Activated CD4-positive, alpha-beta T cell treated with anti-CD3 and anti-CD28 coated beads for 36 hours (primary cell): ENCODE measurements at regions of chr2 and their contacts with region 1.

Region 1: GRCh38 chr2:241734467-241735208 is at the start of gene D2HGDH:
- DNase-seq: peak; percentile 98
- ATAC-seq: peak; percentile 92
- H3K4me3 Mint-ChIP-seq: peak within 1 kb of the TSS; percentile 79
- H3K27ac Mint-ChIP-seq: peak within 1 kb of the TSS; percentile 70
- H3K4me1 Mint-ChIP-seq: peaks cover 57% of the 10 kb centered on the region
- H3K27me3 Mint-ChIP-seq: no peaks in the 10 kb centered on the region
- total RNA-seq, gene D2HGDH: 18.2 to 34.1 TPM

Region 2: GRCh38 chr2:240032406-240033329 is 1702.0 kb before region 1 on chr2:
- CTCF ChIA-PET with region 1: no interaction called
- POLR2A ChIA-PET with region 1: no interaction called
- intact Hi-C with region 1: no loop called
- DNase-seq: no peak
- ATAC-seq: no peak
- H3K4me3 Mint-ChIP-seq: no peak overlapping the region
- H3K27ac Mint-ChIP-seq: no peak overlapping the region
- H3K4me1 Mint-ChIP-seq: no peaks in the 10 kb centered on the region
- H3K27me3 Mint-ChIP-seq: peaks cover 34% of the 10 kb centered on the region

Region 3: GRCh38 chr2:240851078-240851991 is 883.3 kb before region 1 on chr2:
- CTCF ChIA-PET with region 1: no interaction called
- POLR2A ChIA-PET with region 1: no interaction called
- intact Hi-C with region 1: loop called in 1 of 2 experiments (anchors 5 kb)
- DNase-seq: peak; percentile 91
- ATAC-seq: peak; percentile 97
- H3K4me3 Mint-ChIP-seq: no peak overlapping the region
- H3K27ac Mint-ChIP-seq: no peak overlapping the region
- H3K4me1 Mint-ChIP-seq: no peaks in the 10 kb centered on the region
- H3K27me3 Mint-ChIP-seq: peaks cover 3% of the 10 kb centered on the region

Region 4: DNA sequence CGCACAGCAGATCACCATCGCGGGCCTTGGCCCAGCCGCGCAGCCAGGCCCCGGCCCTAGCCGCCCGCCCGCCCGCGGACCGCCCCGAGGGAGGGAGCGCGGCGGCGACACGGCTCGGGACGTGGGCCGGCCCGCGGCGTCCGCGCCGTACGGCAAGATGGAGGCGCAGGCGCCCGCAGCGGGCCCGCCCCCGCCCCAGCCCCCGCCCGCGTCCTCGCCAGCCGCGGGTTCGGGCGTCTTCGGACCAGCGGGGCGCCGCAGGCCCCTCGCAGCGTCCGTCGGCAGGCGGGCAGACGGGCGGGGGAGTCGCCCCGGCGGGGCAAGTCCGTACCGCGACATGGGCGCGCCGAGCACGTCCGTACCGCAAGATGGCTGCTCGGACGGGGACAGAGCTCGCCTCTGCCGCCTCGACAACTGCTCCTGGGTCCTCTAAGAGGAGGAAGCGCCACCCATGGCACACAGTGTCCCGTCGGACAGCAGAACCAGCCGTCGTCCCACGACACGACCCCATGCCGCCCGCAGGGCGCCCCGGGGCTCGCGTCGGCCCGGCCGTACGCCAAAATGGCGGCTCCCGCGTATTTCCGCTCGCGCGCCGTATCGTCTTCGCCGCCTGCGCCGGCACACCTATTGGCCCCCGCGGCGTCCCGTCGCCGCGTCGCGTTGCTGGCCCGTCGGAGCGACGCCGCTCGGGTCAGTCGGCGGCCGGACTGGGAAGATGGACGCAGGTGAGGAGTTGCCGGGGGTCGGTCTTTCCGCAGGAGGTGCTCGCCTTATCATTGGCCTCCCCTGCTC is 97.4 kb before region 1 on chr2 and contains the starts of genes ATG4B and THAP4:
- CTCF ChIA-PET with region 1: no interaction called
- POLR2A ChIA-PET with region 1: no interaction called
- intact Hi-C with region 1: loop called in 1 of 2 experiments (anchors 1 kb)
- DNase-seq: peak; percentile 90
- ATAC-seq: peak; percentile 69
- H3K4me3 Mint-ChIP-seq: peak within 1 kb of the TSS; percentile 84
- H3K27ac Mint-ChIP-seq: peak within 1 kb of the TSS; percentile 96
- H3K4me1 Mint-ChIP-seq: peaks cover 50% of the 10 kb centered on the region
- H3K27me3 Mint-ChIP-seq: no peaks in the 10 kb centered on the region
- total RNA-seq, gene ATG4B: 71.8 to 80.1 TPM
- total RNA-seq, gene THAP4: 42.5 to 54.1 TPM

Region 5: DNA sequence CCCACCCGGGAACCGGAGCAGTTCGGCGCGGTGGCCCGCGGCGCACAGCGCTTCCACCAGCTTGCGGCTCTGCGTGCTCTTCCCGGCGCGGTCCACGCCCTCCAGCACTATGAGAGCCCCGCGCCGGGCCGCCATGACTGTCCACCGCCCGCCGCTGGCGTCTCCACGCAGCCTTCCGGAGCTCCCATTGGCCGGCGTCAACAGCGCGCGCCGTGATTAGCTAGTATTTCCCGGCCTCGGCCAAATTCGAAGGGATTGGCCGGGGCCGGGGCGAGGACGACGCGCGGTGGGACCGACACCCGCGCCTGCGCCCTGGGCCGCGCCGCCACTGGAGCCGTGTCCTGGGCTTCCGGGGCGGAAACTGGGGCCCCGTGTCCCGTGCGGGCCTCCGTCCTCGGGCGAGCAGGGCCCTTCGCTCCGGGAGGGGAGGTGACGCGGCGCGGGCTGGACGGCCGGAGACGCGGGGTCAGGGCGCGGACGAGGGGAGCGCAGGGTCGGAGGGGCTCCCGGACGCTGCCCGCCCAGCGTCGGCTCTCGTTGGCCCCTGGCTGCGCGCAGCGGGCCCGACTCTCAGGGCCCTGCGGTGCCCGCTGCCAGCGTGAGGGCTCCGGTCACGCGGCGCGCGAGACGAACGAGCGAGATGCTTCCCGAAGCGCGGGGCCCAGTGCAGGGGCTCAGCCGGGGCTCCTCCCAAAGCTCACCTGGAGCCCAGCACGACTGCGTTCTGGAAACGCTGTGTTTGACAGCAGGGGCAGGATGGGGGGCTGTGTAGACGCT is 47.8 kb before region 1 on chr2 and contains the start of gene DTYMK:
- CTCF ChIA-PET with region 1: interaction called, 18 read pairs
- POLR2A ChIA-PET with region 1: no interaction called
- intact Hi-C with region 1: loop called (anchors 1 kb)
- DNase-seq: peak; percentile 98
- ATAC-seq: peak; percentile 96
- H3K4me3 Mint-ChIP-seq: peak within 1 kb of the TSS; percentile 98
- H3K27ac Mint-ChIP-seq: peak within 1 kb of the TSS; percentile 96
- H3K4me1 Mint-ChIP-seq: peaks cover 32% of the 10 kb centered on the region
- H3K27me3 Mint-ChIP-seq: no peaks in the 10 kb centered on the region
- total RNA-seq, gene DTYMK: 79.8 to 93.1 TPM

Region 6: GRCh38 chr2:241803387-241804325 is 69.0 kb after region 1 on chr2:
- CTCF ChIA-PET with region 1: no interaction called
- POLR2A ChIA-PET with region 1: interaction called, 3 read pairs
- intact Hi-C with region 1: loop called in 1 of 2 experiments (anchors 2 kb)
- DNase-seq: peak; percentile 69
- ATAC-seq: peak; percentile 76
- H3K4me3 Mint-ChIP-seq: peak overlapping the region; percentile 58
- H3K27ac Mint-ChIP-seq: peak overlapping the region; percentile 12
- H3K4me1 Mint-ChIP-seq: peaks cover 7% of the 10 kb centered on the region
- H3K27me3 Mint-ChIP-seq: peaks cover 6% of the 10 kb centered on the region

Region 7: DNA sequence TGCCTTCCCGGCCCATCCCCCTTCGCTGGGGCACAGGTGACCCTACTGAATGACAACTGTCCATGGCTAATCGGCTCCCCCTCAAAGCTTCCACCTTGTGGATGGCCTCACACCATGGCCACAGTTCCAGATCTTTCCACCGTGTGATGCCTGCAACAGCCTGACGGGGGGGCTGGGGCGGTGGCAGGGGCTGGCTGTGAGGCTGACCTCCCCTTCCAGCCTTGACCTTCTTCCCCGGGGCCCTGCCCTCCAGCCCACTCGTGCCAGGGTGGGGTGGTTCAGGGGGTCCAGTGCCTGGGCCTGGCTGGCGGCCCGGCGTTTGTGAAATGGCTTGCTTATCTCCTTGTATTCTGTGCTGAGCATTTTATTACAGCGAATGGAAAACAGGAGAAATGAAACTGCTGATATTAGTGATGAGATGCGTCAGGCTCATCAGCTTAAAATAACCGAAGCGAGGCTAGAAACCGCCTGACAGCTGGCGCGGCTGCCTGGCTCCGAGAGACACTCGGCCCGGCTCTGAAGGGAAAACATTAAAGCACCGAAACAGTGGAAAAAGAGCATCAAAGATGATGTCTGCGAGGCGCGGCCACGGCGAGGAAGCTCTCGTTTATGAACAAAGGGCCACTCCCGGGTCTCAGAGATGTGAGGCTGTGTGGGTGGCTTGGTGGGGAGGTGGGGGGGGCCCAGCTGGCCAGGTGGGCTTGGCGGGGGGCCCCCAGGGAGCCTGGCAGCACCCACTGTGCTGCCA is 125.0 kb after region 1 on chr2:
- CTCF ChIA-PET with region 1: interaction called, 4 read pairs
- POLR2A ChIA-PET with region 1: no interaction called
- intact Hi-C with region 1: loop called (anchors 2 to 5 kb)
- DNase-seq: peak; percentile 88
- ATAC-seq: peak; percentile 47
- H3K4me3 Mint-ChIP-seq: peak overlapping the region; percentile 85
- H3K27ac Mint-ChIP-seq: peak overlapping the region; percentile 95
- H3K4me1 Mint-ChIP-seq: peaks cover 63% of the 10 kb centered on the region
- H3K27me3 Mint-ChIP-seq: peaks cover 11% of the 10 kb centered on the region